ENCODE measurements at regions of chr12 and their contacts with region 1.

Region 1: DNA sequence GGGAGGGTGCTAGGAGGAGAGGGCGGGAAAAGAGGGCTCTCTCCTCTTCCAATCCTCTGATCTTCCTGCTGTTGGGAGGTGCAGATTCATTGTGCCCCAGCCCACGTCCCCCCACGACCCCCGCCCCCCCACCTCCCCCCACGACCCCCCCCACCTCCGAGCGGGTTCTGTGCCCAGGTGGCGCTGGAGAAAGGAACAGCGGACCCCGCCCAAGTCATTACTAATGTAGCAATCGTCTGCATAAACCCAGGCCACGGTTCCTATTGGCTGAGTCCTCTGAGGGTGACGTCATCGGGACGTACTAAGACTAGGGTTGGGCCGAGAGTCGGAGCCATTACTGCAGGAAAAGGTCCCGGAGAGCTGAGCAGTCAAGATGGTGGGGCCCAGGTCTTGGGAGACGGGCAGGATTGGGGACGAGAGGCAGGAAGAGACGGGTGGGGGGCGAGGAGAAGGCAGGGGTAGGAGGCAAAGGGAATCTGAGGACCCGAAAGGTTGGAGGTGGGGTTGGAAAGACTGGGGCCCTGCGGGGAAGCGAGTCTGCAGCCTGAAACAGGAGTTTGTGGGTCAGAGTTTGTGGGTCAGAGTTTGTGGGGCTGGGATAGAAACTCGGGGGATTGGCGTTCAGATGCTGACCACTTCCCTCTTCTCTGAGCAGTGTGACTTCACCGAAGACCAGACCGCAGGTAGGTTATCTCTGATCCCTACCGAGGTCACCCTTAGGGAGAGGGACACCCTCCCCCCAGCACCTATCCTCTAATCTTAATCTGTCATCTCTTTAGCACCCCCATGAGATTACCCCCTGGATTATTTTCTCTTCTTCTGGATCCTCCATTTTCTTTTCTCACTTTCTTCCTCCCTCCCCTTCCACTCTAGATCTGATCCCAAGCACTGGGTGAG is at the start of gene MYL6:
- DNase-seq: peak; percentile 97
- H3K4me3 ChIP-seq: peak within 1 kb of the TSS; percentile 77 to 94 (median 84)
- H3K27ac ChIP-seq: peak within 1 kb of the TSS; percentile 94 to 100 (median 98)
- H3K4me1 ChIP-seq: peaks cover 9 to 47% (median 38%) of the 10 kb centered on the region in 4 donors
- H3K27me3 ChIP-seq: no peaks in the 10 kb centered on the region
- CTCF ChIP-seq: no peak
- EP300 ChIP-seq: no peak
- POLR2A ChIP-seq: peak; percentile 100
- total RNA-seq, gene MYL6: 1,233 to 3,440 (median 2,458) TPM

Region 2: DNA sequence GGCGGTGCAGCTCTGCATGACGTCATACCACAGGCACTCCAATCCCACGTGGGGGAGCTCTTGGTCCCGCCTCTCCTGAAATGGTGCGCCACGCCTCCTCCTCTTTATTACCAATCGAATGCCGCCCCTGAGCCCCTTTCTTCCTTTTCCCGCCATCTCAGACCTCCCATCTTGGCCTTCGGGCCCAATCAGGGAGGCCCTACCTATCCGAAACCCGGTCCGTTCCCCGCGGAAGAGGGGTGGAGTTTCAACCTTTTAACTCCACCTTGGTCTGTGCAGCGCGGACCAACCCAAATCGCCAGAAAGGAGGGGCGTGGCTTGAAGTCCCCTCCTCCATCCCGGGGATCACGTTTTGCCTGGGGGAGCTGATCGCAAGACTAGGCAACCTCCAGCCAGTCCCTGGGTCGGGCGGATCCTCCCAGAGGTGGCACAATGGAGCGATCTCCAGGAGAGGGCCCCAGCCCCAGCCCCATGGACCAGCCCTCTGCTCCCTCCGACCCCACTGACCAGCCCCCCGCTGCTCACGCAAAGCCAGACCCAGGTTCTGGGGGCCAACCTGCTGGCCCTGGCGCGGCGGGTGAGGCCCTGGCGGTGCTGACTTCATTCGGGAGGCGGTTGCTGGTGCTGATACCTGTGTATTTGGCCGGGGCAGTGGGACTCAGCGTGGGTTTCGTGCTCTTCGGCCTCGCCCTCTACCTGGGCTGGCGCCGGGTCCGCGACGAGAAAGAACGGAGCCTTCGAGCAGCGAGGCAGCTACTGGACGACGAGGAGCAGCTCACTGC is 30.2 kb before region 1 on chr12 and contains the start of gene ESYT1:
- in situ Hi-C with region 1: no loop called
- intact Hi-C with region 1: loop called (anchors 2 kb)
- DNase-seq: peak; percentile 99
- H3K4me3 ChIP-seq: peak within 1 kb of the TSS; percentile 45 to 85 (median 76)
- H3K27ac ChIP-seq: peak within 1 kb of the TSS; percentile 92 to 98 (median 94)
- H3K4me1 ChIP-seq: peaks cover 16 to 41% (median 32%) of the 10 kb centered on the region in 4 donors
- H3K27me3 ChIP-seq: no peaks in the 10 kb centered on the region
- CTCF ChIP-seq: peak in 1 of 5 experiments; percentile 10
- EP300 ChIP-seq: no peak
- POLR2A ChIP-seq: peak; percentile 97
- total RNA-seq, gene ESYT1: 94.2 to 133 (median 97.9) TPM